HepG2 (cell line): ENCODE measurements at regions of chr17 and their contacts with region 1.

Region 1: GRCh38 chr17:41665566-41666236 is 23.0 kb upstream of the EIF1 start:
- DNase-seq: peak; percentile 68
- ATAC-seq: peak; percentile 87
- H3K4me3 ChIP-seq: peak overlapping the region; percentile 54 to 80 (median 55)
- H3K27ac ChIP-seq: no peak overlapping the region
- H3K4me1 ChIP-seq: peaks cover 47% of the 10 kb centered on the region
- H3K27me3 ChIP-seq: peaks cover 0 to 16% of the 10 kb centered on the region in 2 experiments; a peak in 2 of 5 replicates
- CTCF ChIP-seq: peak; percentile 96
- EP300 ChIP-seq: no peak
- POLR2A ChIP-seq: peak in 1 of 2 experiments; percentile 66; a peak in 2 of 4 replicates
- RAD21 ChIP-seq: peak; percentile 54

Region 2: GRCh38 chr17:40803617-40804082 is 862.1 kb before region 1 on chr17:
- CTCF ChIA-PET with region 1: interaction called, 37 read pairs
- POLR2A ChIA-PET with region 1: no interaction called
- in situ Hi-C with region 1: loop called (anchors 5 kb)
- intact Hi-C with region 1: loop called (anchors 1 kb)
- DNase-seq: peak; percentile 77
- ATAC-seq: peak; percentile 99
- H3K4me3 ChIP-seq: no peak overlapping the region
- H3K27ac ChIP-seq: no peak overlapping the region
- H3K4me1 ChIP-seq: peaks cover 6% of the 10 kb centered on the region
- H3K27me3 ChIP-seq: peaks cover 0 to 11% of the 10 kb centered on the region in 2 experiments; a peak in 3 of 5 replicates
- CTCF ChIP-seq: peak; percentile 97
- EP300 ChIP-seq: no peak
- POLR2A ChIP-seq: no peak
- RAD21 ChIP-seq: peak; percentile 92

Region 3: DNA sequence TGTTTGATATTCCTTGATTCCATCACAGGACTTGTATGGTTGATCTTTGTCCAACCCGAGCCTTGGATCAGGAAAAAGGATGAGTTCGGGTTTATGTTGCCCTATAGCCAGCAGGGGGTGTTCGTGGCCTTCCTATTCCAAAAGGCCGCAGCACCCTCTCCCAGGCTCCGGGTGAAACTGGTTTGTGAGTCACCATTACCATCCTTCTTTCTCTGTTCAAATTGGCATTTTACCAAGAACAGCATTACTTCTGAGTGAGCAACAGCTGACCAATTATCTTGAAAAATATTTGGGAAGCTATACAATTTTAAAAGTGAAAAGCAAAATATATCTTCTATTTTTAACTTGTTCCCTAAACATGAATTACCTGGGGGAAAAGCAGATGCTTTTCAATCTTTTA is 756.4 kb before region 1 on chr17:
- CTCF ChIA-PET with region 1: interaction called, 6 read pairs
- POLR2A ChIA-PET with region 1: no interaction called
- in situ Hi-C with region 1: no loop called
- intact Hi-C with region 1: loop called (anchors 2 kb)
- DNase-seq: peak; percentile 92
- ATAC-seq: peak; percentile 93
- H3K4me3 ChIP-seq: no peak overlapping the region
- H3K27ac ChIP-seq: no peak overlapping the region
- H3K4me1 ChIP-seq: peaks cover 33% of the 10 kb centered on the region
- H3K27me3 ChIP-seq: no peaks in the 10 kb centered on the region
- CTCF ChIP-seq: peak; percentile 94
- EP300 ChIP-seq: no peak
- POLR2A ChIP-seq: no peak
- RAD21 ChIP-seq: peak; percentile 99

Region 4: DNA sequence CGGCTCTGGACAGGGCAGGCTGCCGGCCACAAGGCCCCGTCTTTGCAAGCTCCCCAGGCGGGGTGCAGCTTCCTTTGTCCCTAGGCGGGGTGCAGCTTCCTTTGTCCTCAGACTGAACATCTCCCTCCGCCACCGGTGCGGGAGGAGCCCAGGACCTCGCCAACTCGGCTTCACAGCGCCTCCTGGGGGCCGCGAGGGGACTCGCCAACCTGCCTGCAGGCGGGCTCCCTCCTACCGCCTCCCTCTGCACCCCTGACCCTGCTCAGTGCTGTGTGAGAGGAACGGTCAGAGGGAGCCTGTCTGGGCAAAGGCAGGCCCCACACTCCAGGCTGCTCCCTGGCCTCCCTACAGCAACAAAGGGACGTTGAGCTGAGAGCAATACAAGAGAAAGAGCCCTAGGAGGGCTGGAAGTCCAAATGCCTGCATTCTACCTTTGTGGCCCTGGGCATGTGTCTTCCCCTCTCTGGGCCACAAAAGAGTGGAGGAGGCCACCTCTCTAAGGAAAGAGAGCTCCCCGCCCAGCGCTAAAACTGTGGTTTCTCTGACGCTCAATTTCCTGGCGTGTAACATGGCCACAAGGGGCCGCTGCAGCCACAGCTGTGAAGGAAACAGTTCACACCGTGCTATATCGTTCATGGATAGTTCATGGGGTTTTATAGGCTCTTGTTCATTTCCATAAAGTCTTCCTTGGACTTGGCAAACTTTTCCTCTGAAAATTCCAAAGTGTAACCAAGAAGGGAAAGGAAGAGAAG is 116.7 kb before region 1 on chr17:
- CTCF ChIA-PET with region 1: interaction called, 84 read pairs
- POLR2A ChIA-PET with region 1: interaction called, 3 read pairs
- in situ Hi-C with region 1: loop called (anchors 5 kb)
- intact Hi-C with region 1: loop called (anchors 1 kb)
- DNase-seq: peak; percentile 82
- ATAC-seq: peak; percentile 90
- H3K4me3 ChIP-seq: peak overlapping the region; percentile 18 to 67 (median 22); a peak in 4 of 6 replicates
- H3K27ac ChIP-seq: peak overlapping the region; percentile 16
- H3K4me1 ChIP-seq: peaks cover 48% of the 10 kb centered on the region
- H3K27me3 ChIP-seq: peaks cover 4 to 28% of the 10 kb centered on the region in 2 experiments; a peak in 4 of 5 replicates
- CTCF ChIP-seq: peak; percentile 89
- EP300 ChIP-seq: no peak
- POLR2A ChIP-seq: no peak
- RAD21 ChIP-seq: peak; percentile 91

Region 5: DNA sequence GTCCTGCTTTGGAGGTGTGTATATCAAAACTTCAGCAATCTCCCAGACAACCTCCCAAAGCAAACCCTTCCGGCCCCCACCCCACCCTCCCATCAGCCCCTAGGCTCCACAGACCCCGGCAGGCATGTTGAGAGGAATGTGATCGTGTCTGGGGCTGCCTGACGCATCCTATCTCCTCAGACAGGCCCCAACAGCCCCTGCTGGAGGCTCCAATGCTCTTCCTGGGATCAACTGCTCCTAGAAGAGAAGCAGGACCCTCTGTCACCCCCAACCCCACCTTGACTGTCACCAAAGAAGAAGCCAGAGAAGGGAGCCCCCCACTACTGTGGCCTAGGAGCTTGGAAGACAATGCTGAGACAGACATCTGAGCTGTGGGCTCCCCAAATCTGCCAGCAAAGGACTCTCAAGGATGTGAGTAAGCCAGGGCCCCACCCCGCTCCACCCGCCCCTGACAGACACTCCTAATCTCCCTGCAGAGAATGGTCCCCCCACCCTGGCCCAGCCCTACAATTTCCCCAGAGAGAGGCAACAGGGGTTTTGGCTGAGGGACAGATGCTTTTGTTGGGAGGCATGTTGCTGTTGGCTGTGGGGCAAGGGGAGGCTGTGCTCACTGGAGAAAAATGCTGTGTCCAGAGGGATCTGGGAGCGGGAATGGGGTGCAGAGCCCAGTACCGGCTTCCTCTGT is 77.4 kb before region 1 on chr17:
- CTCF ChIA-PET with region 1: interaction called, 12 read pairs
- POLR2A ChIA-PET with region 1: no interaction called
- in situ Hi-C with region 1: no loop called
- intact Hi-C with region 1: loop called (anchors 10 kb)
- DNase-seq: no peak
- ATAC-seq: no peak
- H3K4me3 ChIP-seq: no peak overlapping the region
- H3K27ac ChIP-seq: no peak overlapping the region
- H3K4me1 ChIP-seq: no peaks in the 10 kb centered on the region
- H3K27me3 ChIP-seq: peaks cover 7 to 46% of the 10 kb centered on the region in 2 experiments; a peak in 3 of 5 replicates
- CTCF ChIP-seq: no peak
- EP300 ChIP-seq: no peak
- POLR2A ChIP-seq: no peak
- RAD21 ChIP-seq: no peak

Region 6: GRCh38 chr17:41610965-41611640 is 54.6 kb before region 1 on chr17:
- CTCF ChIA-PET with region 1: interaction called, 10 read pairs
- POLR2A ChIA-PET with region 1: no interaction called
- in situ Hi-C with region 1: no loop called
- intact Hi-C with region 1: no loop called
- DNase-seq: no peak
- ATAC-seq: no peak
- H3K4me3 ChIP-seq: no peak overlapping the region
- H3K27ac ChIP-seq: no peak overlapping the region
- H3K4me1 ChIP-seq: no peaks in the 10 kb centered on the region
- H3K27me3 ChIP-seq: peaks cover 3 to 44% of the 10 kb centered on the region in 2 experiments; a peak in 4 of 5 replicates
- CTCF ChIP-seq: no peak
- EP300 ChIP-seq: no peak
- POLR2A ChIP-seq: no peak
- RAD21 ChIP-seq: no peak

Region 7: DNA sequence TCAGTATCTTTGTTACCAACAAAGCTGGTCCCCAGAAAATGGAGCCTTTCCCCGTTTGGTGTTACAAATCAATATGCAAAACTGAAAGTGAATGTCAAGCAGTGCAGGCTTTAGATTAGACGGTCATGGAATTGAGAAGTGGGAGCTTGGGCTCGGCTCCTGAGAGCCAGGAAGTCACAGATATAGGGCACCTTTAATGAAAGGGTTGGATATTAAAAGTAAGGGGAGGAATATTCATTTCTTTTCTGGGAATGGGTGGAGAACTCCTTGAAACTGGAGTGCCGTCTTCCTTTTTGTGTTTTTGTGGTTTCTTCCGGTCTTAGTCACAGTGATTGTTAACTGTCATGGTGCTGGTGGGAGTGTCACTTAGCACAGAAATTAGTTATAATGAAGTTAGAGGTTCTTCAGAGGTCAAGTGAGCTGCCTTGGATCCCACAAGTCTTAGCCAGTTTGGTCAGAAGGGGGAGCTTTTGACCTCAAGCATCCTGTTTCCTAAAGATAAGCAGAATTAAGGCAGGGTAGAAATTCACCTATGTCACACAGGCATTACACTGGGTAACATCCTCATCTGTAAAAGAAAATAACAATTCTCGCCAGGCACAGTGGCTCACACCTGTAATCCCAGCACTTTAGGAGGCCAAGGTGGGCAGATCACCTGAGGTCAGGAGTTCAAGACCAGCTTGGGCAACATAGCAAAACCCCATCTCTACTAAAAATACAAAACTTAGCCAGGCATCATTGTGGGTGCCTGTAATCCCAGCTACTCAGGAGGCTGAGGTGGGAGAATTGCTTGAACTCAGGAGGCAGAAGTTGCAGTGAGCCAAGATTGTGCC is 13.4 kb after region 1 on chr17:
- CTCF ChIA-PET with region 1: interaction called, 3 read pairs
- POLR2A ChIA-PET with region 1: interaction called, 21 read pairs
- in situ Hi-C with region 1: no loop called
- intact Hi-C with region 1: no loop called
- DNase-seq: no peak
- ATAC-seq: peak; percentile 12; the same call in 2 of the 3 replicates
- H3K4me3 ChIP-seq: peak overlapping the region; percentile 23 to 42 (median 42); a peak in 4 of 6 replicates
- H3K27ac ChIP-seq: no peak overlapping the region
- H3K4me1 ChIP-seq: peaks cover 50% of the 10 kb centered on the region
- H3K27me3 ChIP-seq: peaks cover 2 to 8% of the 10 kb centered on the region in 2 experiments; a peak in 4 of 5 replicates
- CTCF ChIP-seq: peak; percentile 54
- EP300 ChIP-seq: no peak
- POLR2A ChIP-seq: no peak
- RAD21 ChIP-seq: no peak

Region 8: GRCh38 chr17:41910701-41911391 is 245.1 kb after region 1 on chr17:
- CTCF ChIA-PET with region 1: no interaction called
- POLR2A ChIA-PET with region 1: no interaction called
- in situ Hi-C with region 1: no loop called
- intact Hi-C with region 1: no loop called
- DNase-seq: no peak
- ATAC-seq: no peak
- H3K4me3 ChIP-seq: no peak overlapping the region
- H3K27ac ChIP-seq: no peak overlapping the region
- H3K4me1 ChIP-seq: peaks cover 71% of the 10 kb centered on the region
- H3K27me3 ChIP-seq: no peaks in the 10 kb centered on the region
- CTCF ChIP-seq: no peak
- EP300 ChIP-seq: no peak
- POLR2A ChIP-seq: no peak
- RAD21 ChIP-seq: no peak